Calu3 (cell line): ENCODE measurements at regions of chr11 and their contacts with region 1.

Region 1: GRCh38 chr11:10307442-10308207 is 2.8 kb downstream of the ADM start:
- DNase-seq: peak; percentile 82
- H3K4me3 Mint-ChIP-seq: peak overlapping the region; percentile 82
- H3K27ac Mint-ChIP-seq: peak overlapping the region; percentile 86
- H3K4me1 Mint-ChIP-seq: peaks cover 42% of the 10 kb centered on the region
- H3K27me3 Mint-ChIP-seq: no peaks in the 10 kb centered on the region
- CTCF ChIP-seq: peak; percentile 98

Region 2: DNA sequence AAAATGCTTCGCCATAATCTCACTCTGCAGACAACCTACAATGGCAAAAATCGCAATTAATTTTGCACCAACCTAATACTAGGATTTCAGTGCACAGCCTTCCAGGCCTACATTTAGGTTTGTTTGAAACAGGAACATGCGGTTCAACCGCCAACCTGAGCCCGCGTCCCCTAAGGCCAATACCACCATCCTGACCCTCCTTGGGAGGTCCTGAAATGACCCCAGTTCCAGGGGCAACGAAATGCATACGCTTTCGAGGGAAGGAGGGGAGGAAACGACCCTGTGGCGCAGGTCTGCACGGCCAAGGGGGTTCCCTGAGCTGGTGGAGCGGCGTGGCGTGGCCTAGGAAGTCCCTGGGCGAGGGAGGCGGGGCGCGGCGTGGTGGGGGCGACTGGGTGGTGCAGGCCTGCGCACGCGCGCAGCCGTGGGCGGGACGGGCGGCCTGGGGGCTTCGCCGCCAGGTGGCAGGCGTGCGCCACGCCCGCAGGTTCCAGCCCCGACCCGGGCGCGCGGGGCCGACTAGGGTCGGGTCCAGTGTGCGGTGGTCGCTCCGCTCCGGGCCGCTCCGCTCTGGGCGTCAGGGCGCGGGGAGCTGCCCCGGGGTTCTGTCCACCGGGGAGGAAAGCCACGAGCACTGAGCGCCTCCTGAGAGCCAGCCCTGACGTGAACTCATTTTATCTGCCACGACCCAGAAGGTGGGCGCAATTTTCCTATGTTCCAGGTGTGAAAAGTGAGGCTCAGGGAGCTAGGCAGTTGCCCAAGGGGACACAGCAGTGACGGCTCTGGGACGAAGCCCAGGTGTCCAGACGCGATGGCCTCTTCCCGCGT is 549.6 kb before region 1 on chr11:
- CTCF ChIA-PET with region 1: interaction called, 12 read pairs
- intact Hi-C with region 1: loop called (anchors 2 kb)
- DNase-seq: peak; percentile 87
- H3K4me3 Mint-ChIP-seq: peak overlapping the region; percentile 81
- H3K27ac Mint-ChIP-seq: peak overlapping the region; percentile 95
- H3K4me1 Mint-ChIP-seq: peaks cover 21% of the 10 kb centered on the region
- H3K27me3 Mint-ChIP-seq: no peaks in the 10 kb centered on the region
- CTCF ChIP-seq: peak; percentile 88

Region 3: DNA sequence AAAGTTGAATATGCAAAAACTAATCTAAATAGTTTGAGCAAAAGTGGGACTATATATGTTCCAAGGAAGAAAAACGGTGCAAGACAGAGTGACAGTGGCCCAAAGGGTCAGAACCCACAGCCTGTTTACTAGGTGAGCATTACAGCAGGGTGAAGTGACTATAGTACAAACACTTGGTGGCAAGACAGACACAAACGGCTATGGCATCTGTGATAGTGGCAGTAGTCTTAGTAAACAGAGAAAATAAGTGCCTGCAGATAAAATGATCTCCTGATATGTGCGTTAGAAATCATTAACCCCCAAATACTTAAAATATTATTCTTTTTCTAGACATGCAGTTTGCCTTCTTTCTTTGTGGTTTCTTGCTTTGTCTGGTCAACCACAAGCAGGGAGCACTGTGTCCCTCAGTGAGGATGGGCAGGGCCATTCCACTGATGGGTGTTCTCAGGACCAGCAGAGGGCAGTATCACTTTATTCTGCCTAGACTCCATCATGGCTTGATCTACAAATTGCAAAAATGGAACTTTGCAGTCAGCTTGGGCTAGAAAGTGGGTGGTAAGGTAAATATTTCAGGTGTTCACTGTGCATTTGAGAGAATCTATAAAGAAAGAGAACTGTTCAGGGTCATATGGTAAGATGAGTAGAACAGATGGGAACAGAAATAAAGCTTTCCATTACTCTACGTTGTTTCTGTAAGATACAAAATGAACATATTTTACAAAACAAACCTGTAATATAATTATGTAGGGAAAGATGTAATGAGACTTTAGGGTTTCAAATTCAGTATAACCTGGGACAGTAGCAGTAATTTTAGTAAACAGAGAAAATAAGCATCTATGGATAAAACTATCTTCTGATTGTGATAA is 445.5 kb before region 1 on chr11:
- CTCF ChIA-PET with region 1: interaction called, 7 read pairs
- intact Hi-C with region 1: loop called (anchors 5 kb)
- DNase-seq: peak; percentile 61
- H3K4me3 Mint-ChIP-seq: no peak overlapping the region
- H3K27ac Mint-ChIP-seq: no peak overlapping the region
- H3K4me1 Mint-ChIP-seq: peaks cover 8% of the 10 kb centered on the region
- H3K27me3 Mint-ChIP-seq: no peaks in the 10 kb centered on the region
- CTCF ChIP-seq: peak; percentile 68

Region 4: DNA sequence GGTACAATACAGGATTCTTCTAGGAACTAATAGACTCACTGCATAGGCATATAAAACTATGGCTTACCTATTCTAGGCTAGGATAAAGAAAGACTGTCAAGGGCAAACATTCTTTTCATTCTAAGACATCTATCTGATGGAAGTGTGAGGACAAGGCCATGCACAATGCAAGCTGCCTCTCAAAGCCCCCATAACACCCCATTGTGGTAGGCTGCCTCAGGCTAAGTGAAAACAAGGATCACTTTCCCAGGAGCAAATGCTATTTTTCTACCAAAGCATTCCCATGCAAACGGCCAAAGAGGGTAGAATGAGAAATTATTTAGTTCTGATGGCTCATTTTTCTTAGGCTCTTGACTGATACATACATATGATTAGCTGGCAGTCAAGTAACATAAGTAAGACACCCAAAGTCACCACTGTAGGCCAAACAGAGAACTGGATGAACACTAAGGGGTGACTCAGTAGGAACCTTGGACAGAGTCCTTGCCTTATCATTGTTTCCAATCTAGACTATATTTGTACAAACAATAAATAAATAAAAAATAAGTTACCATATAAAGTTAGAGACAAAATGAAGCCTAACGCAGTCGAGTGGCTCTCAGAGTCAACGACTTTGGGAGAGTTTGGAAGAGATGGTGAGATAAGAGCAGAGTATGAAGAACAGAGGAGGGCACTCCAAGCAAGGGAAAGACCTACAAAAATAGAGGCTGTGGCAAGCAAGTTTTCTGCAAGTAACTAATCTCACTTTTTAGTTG is 317.2 kb before region 1 on chr11:
- CTCF ChIA-PET with region 1: no interaction called
- intact Hi-C with region 1: loop called (anchors 10 kb)
- DNase-seq: no peak
- H3K4me3 Mint-ChIP-seq: no peak overlapping the region
- H3K27ac Mint-ChIP-seq: no peak overlapping the region
- H3K4me1 Mint-ChIP-seq: no peaks in the 10 kb centered on the region
- H3K27me3 Mint-ChIP-seq: no peaks in the 10 kb centered on the region
- CTCF ChIP-seq: no peak

Region 5: DNA sequence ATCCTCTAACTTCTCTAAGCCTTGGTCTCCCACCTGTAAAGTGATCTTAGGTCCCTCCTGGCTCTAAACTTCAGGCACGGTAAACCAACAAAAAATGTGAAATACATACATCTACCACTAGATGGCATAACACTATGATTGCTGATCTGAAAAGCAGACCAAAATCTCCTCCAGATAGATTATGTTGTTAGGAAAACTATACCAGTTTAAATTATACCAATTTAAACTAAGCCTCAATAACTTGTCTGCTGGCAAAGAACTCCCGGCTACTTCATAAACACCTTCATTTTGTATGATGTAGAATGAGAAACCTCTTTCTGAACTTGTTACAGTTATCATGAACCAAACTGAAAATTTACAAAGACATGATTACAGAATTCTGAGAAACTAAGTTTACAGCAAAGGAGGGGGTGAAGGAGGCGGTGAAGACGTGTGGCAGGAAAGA is 99.5 kb before region 1 on chr11:
- CTCF ChIA-PET with region 1: interaction called, 5 read pairs
- intact Hi-C with region 1: loop called (anchors 1 kb)
- DNase-seq: peak; percentile 3
- H3K4me3 Mint-ChIP-seq: no peak overlapping the region
- H3K27ac Mint-ChIP-seq: no peak overlapping the region
- H3K4me1 Mint-ChIP-seq: no peaks in the 10 kb centered on the region
- H3K27me3 Mint-ChIP-seq: no peaks in the 10 kb centered on the region
- CTCF ChIP-seq: peak; percentile 38

Region 6: GRCh38 chr11:10257478-10257877 is 50.1 kb before region 1 on chr11:
- CTCF ChIA-PET with region 1: interaction called, 11 read pairs
- intact Hi-C with region 1: no loop called
- DNase-seq: no peak
- H3K4me3 Mint-ChIP-seq: no peak overlapping the region
- H3K27ac Mint-ChIP-seq: no peak overlapping the region
- H3K4me1 Mint-ChIP-seq: peaks cover 8% of the 10 kb centered on the region
- H3K27me3 Mint-ChIP-seq: no peaks in the 10 kb centered on the region
- CTCF ChIP-seq: no peak

Region 7: DNA sequence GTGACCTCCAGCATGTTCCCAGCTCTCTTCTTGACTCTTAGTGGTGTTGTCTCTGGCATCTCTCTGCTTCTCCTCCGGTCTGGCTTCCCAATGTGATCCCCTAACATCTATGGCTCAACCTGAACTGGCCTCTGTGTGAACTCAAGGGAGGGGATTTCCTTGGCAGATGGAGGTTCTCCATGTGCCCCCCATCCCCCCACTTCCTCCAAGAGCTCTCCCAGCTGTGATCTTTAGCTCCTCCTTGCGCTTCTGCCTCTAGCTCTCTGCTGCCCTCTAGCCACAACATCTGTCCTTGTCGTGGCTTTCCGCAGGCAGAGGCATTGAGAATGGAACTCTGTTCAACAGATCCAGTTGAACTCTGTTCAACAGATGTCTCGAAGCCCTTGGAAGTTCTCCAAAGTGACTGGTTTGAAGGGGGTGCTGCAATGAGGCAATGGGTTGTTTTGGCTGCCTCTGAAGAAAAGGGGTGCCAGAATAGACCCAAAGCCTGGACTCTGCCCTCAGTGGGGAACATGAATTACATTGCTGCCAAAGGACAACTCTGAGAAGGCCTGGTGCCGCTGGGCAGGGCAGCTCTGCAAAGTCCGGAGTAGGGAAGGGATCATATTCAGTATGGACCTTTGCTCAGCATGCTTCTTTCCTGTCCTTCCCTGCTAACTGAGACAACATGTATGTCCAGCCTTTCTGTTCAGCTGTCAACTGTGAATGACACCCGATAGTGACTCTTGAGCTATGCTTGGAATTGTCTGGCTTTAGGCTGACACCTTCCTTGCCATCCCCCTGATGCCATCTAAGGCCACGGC is 59.1 kb after region 1 on chr11:
- CTCF ChIA-PET with region 1: interaction called, 17 read pairs
- intact Hi-C with region 1: no loop called
- DNase-seq: peak; percentile 88
- H3K4me3 Mint-ChIP-seq: peak overlapping the region; percentile 11
- H3K27ac Mint-ChIP-seq: peak overlapping the region; percentile 9
- H3K4me1 Mint-ChIP-seq: peaks cover 12% of the 10 kb centered on the region
- H3K27me3 Mint-ChIP-seq: peaks cover 13% of the 10 kb centered on the region
- CTCF ChIP-seq: peak; percentile 82